ENCODE measurements at regions of chr7 and their contacts with region 1.

Region 1: GRCh38 chr7:137943147-137943551 is 58.7 kb downstream of the CREB3L2 start:
- DNase-seq: no peak
- ATAC-seq: peak; percentile 94

Region 2: DNA sequence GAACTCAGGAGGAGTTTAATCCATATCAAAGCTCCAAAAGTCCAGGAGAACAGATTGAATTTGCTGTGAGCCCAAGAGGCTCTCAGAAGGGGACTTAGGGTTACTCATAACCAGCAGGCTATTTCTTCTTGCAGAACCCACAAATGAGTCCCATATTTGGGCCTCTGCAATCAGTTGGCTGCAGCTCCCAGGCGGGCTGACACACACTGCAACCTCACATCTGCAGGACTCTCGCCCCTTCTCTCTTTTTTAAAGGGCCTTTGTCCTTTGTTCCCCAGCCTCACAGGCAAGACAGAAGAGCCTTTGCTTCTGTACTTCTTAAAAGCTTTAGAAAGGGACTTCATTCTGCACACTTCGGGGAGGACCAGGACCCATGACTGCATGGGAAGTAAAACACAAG is 32.1 kb after region 1 on chr7:
- intact Hi-C with region 1: loop called (anchors 5 kb)
- DNase-seq: peak; percentile 75
- ATAC-seq: peak; percentile 70